RWPE1 (cell line): ENCODE measurements at regions of chr2 and their contacts with region 1.

Region 1: DNA sequence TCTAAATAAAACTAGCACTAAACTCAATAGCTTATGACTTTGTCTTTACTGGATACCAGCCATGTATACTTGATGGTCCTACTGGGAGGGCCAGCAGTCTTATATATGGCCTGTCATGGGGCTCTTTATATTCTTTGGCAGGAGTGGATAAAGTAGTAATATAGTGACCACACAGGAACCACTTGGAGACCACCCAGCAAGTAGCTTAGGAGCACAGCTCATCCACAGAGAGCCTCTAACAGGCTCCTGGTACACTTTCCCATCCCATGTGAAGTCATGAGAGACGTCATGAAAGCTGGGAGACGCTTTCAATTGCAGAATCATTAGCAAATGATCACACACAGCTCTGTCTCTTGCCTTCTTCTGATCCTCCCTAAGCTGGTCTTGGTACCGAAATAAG is 360.9 kb upstream of the ACVR2A start:
- DNase-seq: no peak
- H3K27ac ChIP-seq: no peak overlapping the region
- CTCF ChIP-seq: no peak

Region 2: DNA sequence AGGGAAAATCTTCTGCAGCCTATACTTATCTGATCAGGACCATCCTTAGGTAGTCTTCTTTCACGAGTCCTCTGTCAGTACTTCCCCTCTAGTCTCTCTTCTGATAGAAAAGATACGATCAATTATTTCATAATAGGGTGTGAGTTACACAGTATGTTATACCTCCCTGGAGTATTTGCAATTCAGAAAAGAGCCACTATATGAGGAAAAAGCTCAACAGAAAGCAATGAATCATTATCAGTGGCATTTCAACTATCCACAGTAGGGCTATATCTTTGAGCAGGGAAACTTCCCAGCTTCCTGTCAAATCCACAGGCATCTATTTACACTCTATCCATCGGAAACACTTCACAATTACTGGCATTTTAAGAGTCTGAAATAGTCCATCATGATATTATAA is 255.6 kb after region 1 on chr2:
- CTCF ChIA-PET with region 1: interaction called, 10 read pairs
- POLR2A ChIA-PET with region 1: no interaction called
- DNase-seq: no peak
- H3K27ac ChIP-seq: no peak overlapping the region
- CTCF ChIP-seq: no peak